ENCODE measurements at regions of chr1 and their contacts with region 1.

Region 1: GRCh38 chr1:83583351-83584014 is 415.4 kb downstream of the TTLL7 start:
- DNase-seq: peak; percentile 83
- H3K4me3 Mint-ChIP-seq: no peak overlapping the region
- H3K27ac Mint-ChIP-seq: no peak overlapping the region
- H3K4me1 Mint-ChIP-seq: no peaks in the 10 kb centered on the region
- H3K27me3 Mint-ChIP-seq: no peaks in the 10 kb centered on the region

Region 2: DNA sequence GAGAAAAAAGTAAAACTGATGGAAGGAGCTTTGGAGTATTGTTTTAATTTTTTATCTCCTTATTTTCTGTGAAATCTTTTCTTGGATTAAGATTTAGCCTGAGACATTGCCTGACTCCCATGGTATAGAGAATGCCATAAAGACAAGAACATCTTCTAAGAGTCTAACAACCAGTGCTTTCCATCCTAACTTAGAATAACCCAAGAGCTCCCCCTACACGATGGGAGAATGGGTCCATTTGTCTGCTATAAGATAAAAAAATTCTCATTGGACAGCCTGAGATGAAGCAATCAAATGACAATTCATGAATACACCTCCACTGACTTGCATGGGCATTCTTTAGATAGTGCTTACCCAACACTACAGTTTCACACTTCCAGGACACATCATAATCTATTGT is 62.7 kb before region 1 on chr1:
- intact Hi-C with region 1: loop called (anchors 10 kb)
- DNase-seq: no peak
- H3K4me3 Mint-ChIP-seq: no peak overlapping the region
- H3K27ac Mint-ChIP-seq: no peak overlapping the region
- H3K4me1 Mint-ChIP-seq: peaks cover 11% of the 10 kb centered on the region
- H3K27me3 Mint-ChIP-seq: no peaks in the 10 kb centered on the region

Measured in activated CD4-positive, alpha-beta T cell treated with anti-CD3 and anti-CD28 coated beads, Interleukin-2, amount 10 ng/mL, durations not matched to agents 24 days and 14 days (primary cell).